Vagina (tissue), 2 donors: ENCODE measurements at regions of chr5 and their contacts with region 1.

Region 1: GRCh38 chr5:151002250-151002649 is 18.1 kb upstream of the GPX3 start:
- DNase-seq: peak in 1 of 2 donors; percentile 82
- H3K4me3 ChIP-seq: no peak overlapping the region
- H3K27ac ChIP-seq: no peak overlapping the region
- H3K4me1 ChIP-seq: peaks cover 44% of the 10 kb centered on the region
- H3K27me3 ChIP-seq: no peaks in the 10 kb centered on the region
- CTCF ChIP-seq: peak; percentile 33 to 82 (median 74)
- POLR2A ChIP-seq: no peak

Region 2: DNA sequence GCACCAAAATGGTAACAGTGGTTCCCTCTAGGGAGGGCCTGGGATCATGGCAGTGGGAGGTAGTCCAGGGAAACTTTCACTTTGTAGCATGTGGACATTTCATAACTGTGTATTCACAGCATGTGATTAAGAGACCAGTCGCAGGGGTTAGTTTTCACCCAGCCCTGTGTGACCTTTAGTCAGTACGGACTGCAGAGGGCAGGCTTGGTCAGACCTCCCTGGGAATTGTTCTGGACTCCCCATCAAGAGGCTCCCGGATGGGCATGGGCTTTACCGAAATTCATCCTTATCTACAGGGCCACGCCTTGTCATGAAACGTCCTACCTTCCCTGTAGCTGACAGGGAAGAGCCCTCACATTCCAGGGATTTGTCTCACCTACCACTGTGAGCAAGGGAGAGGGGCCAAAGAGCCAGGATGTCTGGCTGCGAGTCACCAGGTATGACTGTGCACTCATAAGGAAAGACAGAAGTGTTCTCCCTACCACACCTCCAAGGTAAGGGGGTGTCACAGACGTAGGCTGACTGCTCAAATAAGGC is 38.0 kb after region 1 on chr5:
- intact Hi-C with region 1: loop called (anchors 5 kb)
- DNase-seq: no peak
- H3K4me3 ChIP-seq: no peak overlapping the region
- H3K27ac ChIP-seq: peak overlapping the region; percentile 86
- H3K4me1 ChIP-seq: peaks cover 45% of the 10 kb centered on the region
- H3K27me3 ChIP-seq: no peaks in the 10 kb centered on the region
- CTCF ChIP-seq: no peak
- POLR2A ChIP-seq: no peak

Region 3: GRCh38 chr5:151107738-151108508 is 105.7 kb after region 1 on chr5:
- intact Hi-C with region 1: loop called (anchors 5 kb)
- DNase-seq: no peak
- H3K4me3 ChIP-seq: no peak overlapping the region
- H3K27ac ChIP-seq: peak overlapping the region; percentile 64
- H3K4me1 ChIP-seq: peaks cover 30% of the 10 kb centered on the region
- H3K27me3 ChIP-seq: no peaks in the 10 kb centered on the region
- CTCF ChIP-seq: no peak
- POLR2A ChIP-seq: no peak